ENCODE measurements at regions of chr15 and their contacts with region 1.

Region 1: GRCh38 chr15:57861036-57861638 is 154.6 kb downstream of the POLR2M start:
- DNase-seq: no peak
- ATAC-seq: peak; percentile 69

Region 2: DNA sequence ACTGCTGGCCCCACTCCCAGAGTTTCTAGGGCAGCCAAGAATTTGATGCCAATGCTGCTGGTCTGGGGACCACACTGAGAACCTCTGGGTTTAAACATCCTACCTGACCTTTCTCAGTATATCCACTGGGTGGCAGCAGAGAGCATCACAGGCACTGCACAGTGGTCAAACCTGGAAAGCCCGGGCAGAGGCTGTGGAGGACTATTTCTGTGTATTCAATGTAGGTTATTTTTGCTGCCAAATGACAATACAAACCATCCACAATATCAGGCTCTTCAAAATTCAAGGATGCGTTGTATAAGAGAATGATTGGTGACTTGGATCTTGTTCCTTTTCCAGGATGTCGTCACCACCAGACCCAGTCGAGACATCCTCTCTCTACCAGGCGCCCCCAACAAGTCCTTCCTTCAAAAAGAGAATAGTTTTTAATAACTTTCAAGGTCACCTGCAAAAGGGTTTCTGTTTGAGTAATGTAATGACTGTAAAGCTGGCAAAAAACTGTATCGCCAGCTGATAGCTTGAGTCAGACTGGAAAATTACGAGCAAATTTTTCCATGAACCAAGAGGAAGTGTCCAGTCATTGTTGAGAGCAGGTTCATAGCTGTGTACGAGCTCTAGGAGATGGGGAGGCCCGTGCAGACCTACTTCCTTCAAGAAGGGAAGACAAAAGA is 300.0 kb before region 1 on chr15:
- intact Hi-C with region 1: loop called (anchors 5 kb)
- DNase-seq: peak; percentile 76
- ATAC-seq: peak; percentile 91

Region 3: DNA sequence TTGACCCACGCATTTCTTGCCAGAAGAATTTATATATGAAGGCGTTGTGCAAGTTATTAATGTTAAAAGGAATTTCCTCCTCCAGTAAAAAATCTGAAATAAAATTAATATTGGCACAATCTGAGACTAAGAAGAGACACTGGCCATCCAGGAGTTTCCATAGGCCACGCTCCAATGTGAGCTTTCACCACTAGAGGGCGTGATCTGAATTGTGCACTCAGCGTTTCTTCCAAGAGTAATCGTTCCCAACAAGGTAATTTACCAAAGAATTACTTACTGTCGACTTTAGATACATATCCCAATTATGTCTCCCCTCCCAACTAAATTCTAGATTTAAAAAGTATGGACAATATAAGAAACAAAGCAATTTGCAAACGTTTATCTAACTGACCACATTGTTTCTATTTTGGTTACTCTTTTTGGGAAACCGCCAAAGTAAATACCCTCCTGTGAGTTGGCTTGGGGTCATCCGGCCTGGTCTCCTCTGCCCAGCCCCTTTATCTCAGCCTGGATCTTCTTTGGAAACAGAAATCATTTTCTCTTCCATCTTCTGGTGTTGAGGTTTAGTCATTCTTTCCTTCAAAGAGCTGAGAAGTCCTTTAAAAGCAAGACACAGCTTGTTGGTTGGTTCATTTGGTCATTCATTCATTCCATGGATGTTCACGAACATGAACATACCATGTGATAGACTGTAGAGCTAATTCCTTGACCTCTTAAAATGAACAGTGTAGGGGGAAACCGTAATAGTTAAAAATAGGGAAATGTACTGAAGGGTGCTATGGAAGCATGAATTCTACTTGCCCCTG is 128.4 kb before region 1 on chr15:
- intact Hi-C with region 1: loop called (anchors 5 kb)
- DNase-seq: no peak
- ATAC-seq: peak; percentile 78

Region 4: DNA sequence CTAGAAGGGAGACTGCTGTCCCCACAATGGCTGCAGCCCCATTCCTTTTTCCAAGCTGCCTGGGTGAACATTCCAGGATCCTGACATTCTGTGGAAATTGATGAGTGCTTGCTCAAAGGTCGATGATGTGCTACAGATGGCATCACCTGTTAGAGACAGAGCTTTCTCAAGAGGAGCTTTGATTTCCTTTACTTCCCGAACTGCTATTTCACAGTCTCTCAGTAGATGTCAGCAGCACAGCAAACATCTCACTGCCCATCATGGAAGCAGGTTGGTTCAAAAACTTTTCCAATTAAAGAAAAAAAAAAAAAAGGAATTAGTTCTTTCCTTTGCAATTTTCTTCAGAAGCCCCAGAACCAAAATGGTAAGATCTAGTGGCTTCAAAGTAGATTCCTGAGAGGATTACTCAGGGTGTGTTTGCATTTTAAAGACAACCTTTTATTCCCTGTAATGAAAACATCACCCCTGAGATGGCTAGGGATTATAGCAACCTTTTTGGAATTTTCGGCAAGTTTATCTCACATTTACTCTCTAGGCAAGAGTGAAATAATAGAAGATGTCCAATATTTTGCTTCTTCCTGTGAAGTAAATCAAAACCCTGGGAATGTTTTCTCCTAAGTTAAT is 109.8 kb before region 1 on chr15:
- intact Hi-C with region 1: loop called (anchors 5 kb)
- DNase-seq: no peak
- ATAC-seq: peak; percentile 60

Region 5: DNA sequence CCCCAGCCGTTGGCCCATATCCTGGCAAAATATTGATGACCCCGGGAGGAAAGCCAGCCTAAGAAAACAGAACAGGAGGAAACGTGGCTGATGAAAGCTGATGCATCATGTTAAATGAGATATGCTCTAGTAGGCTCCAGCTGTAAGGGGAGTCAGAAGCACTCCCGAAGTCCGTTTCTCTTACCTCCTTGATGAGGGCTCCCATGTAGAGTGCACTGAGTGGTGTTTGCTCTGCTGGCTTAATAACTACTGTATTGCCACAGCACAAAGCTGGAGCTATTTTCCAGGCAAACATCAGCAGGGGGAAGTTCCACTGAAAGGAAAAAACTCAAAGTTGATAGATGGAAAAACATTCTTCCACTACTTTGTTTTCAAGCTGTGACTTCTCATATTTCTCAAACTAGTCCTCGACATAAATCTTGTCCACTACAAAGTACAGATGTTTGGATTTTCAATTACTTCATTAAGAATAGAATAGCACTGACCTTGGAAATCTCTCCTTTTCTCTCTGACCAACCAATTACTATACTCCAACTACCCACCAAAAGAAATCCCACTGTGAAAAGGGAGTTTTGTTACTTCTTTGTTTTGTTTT is 131.7 kb after region 1 on chr15:
- intact Hi-C with region 1: no loop called
- DNase-seq: no peak
- ATAC-seq: no peak